ENCODE measurements at regions of chr10 and their contacts with region 1.

Region 1: DNA sequence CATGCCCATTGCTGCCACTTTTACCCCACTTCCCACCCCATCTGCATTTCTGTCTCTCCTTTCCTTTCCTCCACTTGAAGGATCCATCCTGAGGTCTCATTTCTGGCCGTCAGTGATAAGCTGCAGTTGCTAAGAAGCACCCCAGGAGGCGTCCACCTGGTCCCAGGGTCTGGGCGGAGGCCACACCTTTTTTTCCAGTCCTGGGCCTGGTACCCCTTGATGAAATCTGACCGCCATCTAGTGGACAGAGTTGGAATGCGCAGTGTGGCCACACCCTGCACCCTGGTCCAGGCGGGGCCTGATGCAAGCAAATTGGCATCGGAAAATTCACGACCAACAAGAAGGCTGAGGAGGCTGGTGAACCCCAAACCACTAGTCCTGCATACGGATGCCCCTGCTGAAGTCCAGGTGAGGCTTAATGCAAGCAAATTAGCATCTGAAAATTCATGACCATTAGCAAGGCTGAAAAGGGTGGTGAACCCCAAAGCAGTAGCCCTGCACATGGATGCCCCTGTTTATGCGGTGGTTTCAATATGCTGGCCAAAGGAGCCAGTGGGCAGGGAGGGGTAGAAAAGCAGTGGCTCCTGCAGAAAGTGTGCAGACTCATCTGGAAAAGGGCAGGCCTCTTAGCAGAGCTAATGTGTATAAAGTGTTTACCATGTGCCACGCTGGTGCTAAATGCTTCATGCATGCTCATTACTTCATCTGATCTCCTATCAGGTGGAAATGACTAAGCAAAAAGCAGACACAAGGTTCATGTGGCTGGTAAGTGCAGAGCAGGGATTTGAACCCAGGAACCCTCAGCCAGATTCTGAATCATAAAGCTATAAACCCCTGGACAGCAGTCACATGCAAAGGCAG is 43.2 kb downstream of the GPAM start:
- DNase-seq: peak; percentile 10 to 33
- ATAC-seq: no peak
- H3K4me3 ChIP-seq: no peak overlapping the region
- H3K27ac ChIP-seq: no peak overlapping the region
- H3K4me1 ChIP-seq: no peaks in the 10 kb centered on the region
- H3K27me3 ChIP-seq: no peaks in the 10 kb centered on the region
- CTCF ChIP-seq: peak in 4 of 5 experiments; percentile 45 to 77 (median 66)
- POLR2A ChIP-seq: no peak

Region 2: GRCh38 chr10:111756217-111757061 is 383.9 kb before region 1 on chr10:
- in situ Hi-C with region 1: loop called in 3 of 4 experiments (anchors 10 to 25 kb)
- intact Hi-C with region 1: loop called (anchors 10 kb)
- DNase-seq: peak in 1 of 2 donors; percentile 18
- ATAC-seq: no peak
- H3K4me3 ChIP-seq: no peak overlapping the region
- H3K27ac ChIP-seq: no peak overlapping the region
- H3K4me1 ChIP-seq: no peaks in the 10 kb centered on the region
- H3K27me3 ChIP-seq: no peaks in the 10 kb centered on the region
- CTCF ChIP-seq: peak in 1 of 5 experiments; percentile 13
- POLR2A ChIP-seq: no peak

Region 3: DNA sequence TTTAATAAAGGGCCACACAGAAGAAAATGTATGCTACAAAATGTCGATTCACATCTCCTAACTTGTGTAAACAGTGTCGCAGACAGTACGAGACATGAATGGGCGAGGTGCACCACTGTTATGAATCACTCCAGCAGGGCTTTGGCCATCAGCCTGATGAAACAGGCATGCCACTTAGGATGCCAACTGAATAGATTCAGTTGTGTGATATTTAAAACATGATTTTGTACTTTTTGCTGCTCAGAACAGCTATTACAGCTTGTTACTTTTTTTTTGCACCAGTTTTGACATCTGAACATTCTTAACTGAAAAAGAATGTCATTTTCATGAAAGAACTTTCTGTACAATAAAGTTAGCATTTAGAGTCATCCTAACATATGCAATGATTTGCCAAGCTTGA is 444.8 kb after region 1 on chr10:
- in situ Hi-C with region 1: no loop called
- intact Hi-C with region 1: no loop called
- DNase-seq: no peak
- ATAC-seq: no peak
- H3K4me3 ChIP-seq: no peak overlapping the region
- H3K27ac ChIP-seq: no peak overlapping the region
- H3K4me1 ChIP-seq: no peaks in the 10 kb centered on the region
- H3K27me3 ChIP-seq: no peaks in the 10 kb centered on the region
- CTCF ChIP-seq: no peak
- POLR2A ChIP-seq: no peak

Measured in gastrocnemius medialis (tissue), 4 donors.